Activated CD8-positive, alpha-beta memory T cell treated with anti-CD3 and anti-CD28 coated beads, Interleukin-2, amount 10 ng/mL, durations not matched to agents 7 days and 5 days (primary cell): ENCODE measurements at regions of chr12 and their contacts with region 1.

Region 1: GRCh38 chr12:109888179-109889020 is 8.1 kb upstream of the GLTP start:
- DNase-seq: peak; percentile 62
- ATAC-seq: peak; percentile 79
- H3K4me3 Mint-ChIP-seq: peak overlapping the region; percentile 46
- H3K27ac Mint-ChIP-seq: peak overlapping the region; percentile 99
- H3K4me1 Mint-ChIP-seq: peaks cover 43% of the 10 kb centered on the region
- H3K27me3 Mint-ChIP-seq: no peaks in the 10 kb centered on the region

Region 2: DNA sequence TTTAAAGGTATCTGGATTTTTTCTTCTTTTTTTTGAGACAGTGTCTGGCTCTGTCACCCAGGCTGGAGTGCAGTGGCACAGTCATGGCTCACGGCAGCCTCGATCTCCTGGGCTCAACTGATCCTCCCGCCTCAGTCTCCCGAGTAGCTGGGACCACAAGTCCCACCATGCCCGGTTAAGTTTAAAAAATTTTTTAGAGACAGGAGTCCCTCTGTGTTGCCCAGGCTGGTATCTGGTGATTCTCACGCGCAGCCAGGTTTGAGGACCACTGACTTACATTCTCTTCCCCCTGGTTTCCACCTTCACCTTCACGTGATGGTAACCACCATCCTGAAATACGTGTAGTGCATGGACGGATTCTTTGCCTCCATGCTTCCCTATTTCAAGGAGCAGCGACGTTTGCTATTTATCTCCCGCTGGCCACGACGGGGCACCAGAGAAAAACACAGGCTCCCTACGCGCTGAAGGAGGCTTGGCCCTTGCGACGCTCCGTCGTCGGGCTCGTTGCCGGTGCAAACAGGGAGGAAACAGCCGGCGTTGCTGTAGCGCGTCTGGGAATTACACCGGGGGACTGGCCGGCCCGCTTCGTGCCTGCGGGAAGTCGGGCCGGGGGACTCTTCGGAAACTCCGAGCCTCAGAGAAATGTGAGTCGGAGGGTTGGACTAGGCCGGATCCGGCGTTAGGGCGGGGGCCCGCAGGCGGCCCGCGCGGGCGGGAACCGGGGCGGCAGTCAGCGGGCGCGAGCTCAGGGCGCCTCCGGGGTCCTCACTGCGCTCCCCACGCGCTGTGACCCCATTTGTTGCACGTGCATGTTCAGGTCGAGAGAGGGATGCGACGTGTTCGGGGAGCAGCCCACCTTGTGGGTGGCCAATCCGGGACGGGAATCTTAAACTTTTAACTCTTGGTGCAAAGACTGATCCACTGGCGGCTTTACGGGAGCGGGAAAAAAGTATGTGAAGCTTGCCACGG is 11.7 kb after region 1 on chr12 and contains the start of gene TCHP:
- CTCF ChIA-PET with region 1: interaction called, 17 read pairs
- DNase-seq: peak; percentile 84
- ATAC-seq: peak; percentile 92
- H3K4me3 Mint-ChIP-seq: peak within 1 kb of the TSS; percentile 80
- H3K27ac Mint-ChIP-seq: peak within 1 kb of the TSS; percentile 95
- H3K4me1 Mint-ChIP-seq: peaks cover 27% of the 10 kb centered on the region
- H3K27me3 Mint-ChIP-seq: no peaks in the 10 kb centered on the region
- total RNA-seq, gene TCHP: 38.4 to 40.1 TPM